ENCODE measurements at regions of chr1 and their contacts with region 1.

Region 1: GRCh38 chr1:151594143-151594625 is 17.7 kb upstream of the SNX27 start:
- DNase-seq: peak; percentile 84
- H3K4me3 Mint-ChIP-seq: no peak overlapping the region
- H3K27ac Mint-ChIP-seq: no peak overlapping the region
- H3K4me1 Mint-ChIP-seq: peaks cover 21% of the 10 kb centered on the region
- H3K27me3 Mint-ChIP-seq: no peaks in the 10 kb centered on the region
- CTCF ChIP-seq: peak; percentile 99

Region 2: DNA sequence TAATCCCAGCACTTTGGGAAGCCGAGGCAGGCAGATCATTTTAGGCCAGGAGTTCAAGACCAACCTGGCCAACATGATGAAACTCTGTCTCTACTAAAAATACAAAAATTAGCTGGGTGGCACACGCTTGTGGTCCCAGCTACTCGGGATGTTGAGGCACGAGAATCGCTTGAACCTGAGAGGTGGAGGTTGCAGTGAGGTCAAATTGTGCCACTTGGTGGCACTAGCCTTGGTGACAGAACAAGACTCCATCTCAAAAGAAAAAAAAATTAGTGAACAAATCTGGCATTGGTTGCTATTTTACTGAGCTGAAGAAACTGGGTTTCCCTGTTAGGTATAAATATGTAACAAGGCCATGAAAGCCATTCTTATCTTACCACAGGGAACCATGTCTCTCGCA is 366.6 kb before region 1 on chr1:
- CTCF ChIA-PET with region 1: no interaction called
- POLR2A ChIA-PET with region 1: no interaction called
- intact Hi-C with region 1: no loop called
- DNase-seq: no peak
- H3K4me3 Mint-ChIP-seq: no peak overlapping the region
- H3K27ac Mint-ChIP-seq: no peak overlapping the region
- H3K4me1 Mint-ChIP-seq: peaks cover 6% of the 10 kb centered on the region
- H3K27me3 Mint-ChIP-seq: no peaks in the 10 kb centered on the region
- CTCF ChIP-seq: no peak

Region 3: DNA sequence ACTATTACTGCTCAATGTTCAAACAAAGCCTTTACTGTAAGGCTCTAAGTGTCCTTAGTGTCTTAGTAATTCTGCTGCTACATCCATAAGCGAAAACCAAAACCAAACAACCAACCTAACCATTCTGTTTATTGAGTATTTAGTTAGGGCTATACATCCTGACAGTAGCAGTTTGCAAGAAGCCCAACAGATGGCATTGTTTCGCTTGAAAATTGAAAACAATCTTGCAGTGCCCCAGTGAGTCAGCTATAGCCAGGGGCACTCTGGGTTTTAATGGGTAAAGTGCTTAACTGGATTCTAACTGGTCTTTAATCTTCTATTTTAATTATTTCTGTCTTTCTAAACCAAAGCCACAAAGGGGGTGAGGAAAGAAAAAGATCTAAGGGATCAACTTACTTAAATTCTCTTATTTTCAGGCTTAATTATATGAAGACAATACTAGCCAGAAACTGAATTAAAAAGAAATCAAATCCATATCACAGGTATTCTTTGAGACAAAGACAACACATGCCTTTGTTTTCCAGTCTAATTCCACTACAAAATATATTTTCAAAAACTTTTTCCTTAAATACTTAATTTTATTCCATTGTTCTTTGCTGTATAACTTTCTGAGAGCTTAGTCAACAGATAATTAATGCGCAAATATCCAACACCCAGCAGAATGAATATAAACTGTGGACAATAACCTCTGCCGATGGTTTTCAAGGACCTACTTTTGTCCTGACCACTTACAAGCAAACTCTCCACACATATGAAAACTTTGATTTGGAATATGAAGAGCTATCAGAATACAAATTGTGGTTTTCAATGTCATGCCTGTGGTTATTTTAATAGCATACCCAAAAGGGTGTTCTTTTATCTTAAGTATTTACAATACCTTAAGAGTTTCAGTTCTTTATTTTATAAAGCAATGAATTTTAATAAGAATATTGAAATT is 150.1 kb before region 1 on chr1:
- CTCF ChIA-PET with region 1: interaction called, 9 read pairs
- POLR2A ChIA-PET with region 1: interaction called, 5 read pairs
- intact Hi-C with region 1: loop called (anchors 1 kb)
- DNase-seq: peak; percentile 94
- H3K4me3 Mint-ChIP-seq: no peak overlapping the region
- H3K27ac Mint-ChIP-seq: no peak overlapping the region
- H3K4me1 Mint-ChIP-seq: peaks cover 24% of the 10 kb centered on the region
- H3K27me3 Mint-ChIP-seq: no peaks in the 10 kb centered on the region
- CTCF ChIP-seq: peak; percentile 93

Region 4: DNA sequence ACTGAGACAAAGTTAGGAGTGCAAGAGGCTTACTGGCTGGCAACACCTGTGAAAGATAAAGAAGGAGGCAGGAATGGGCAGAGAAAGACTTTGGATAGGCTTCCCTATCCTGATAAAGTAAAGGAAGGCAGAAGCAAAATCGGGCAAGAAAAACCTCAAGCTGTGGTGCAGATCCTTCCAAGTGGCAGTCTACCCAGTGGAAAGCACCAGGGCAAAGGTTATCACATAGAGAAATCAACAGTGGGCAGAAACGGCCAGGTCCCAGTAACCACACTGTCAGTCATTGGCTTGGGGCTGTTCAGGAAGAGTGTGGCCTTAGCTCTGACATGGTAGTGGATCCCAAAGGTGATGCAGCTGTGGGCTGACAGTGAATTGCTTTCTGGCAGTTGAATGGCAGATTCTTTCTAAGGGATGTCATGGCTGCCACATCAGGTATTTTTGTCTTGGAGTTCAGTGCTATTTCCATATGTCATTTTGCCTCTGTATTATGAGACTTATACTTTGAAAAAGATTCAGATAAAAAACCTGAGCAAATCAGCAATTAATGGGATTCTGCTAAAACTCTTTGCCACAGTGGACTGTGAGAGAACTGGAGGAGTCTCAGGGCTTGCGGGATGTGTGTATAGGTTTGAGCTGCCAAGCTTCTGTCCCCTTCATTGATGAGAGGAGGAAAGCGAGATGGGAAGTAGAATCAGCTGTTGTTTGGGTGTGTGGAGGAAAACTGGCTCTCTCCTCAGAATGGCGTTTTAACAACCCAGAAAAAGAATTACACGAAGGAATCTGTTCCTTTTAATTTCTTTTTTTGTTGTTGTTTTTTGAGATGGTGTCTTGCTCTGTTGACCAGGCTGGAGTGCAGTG is 91.0 kb before region 1 on chr1:
- CTCF ChIA-PET with region 1: no interaction called
- POLR2A ChIA-PET with region 1: no interaction called
- intact Hi-C with region 1: no loop called
- DNase-seq: no peak
- H3K4me3 Mint-ChIP-seq: no peak overlapping the region
- H3K27ac Mint-ChIP-seq: no peak overlapping the region
- H3K4me1 Mint-ChIP-seq: no peaks in the 10 kb centered on the region
- H3K27me3 Mint-ChIP-seq: peaks cover 55% of the 10 kb centered on the region
- CTCF ChIP-seq: no peak

Region 5: GRCh38 chr1:151547119-151547899 is 46.9 kb before region 1 on chr1:
- CTCF ChIA-PET with region 1: interaction called, 15 read pairs
- POLR2A ChIA-PET with region 1: interaction called, 4 read pairs
- intact Hi-C with region 1: no loop called
- DNase-seq: peak; percentile 98
- H3K4me3 Mint-ChIP-seq: peak overlapping the region; percentile 51
- H3K27ac Mint-ChIP-seq: peak overlapping the region; percentile 67
- H3K4me1 Mint-ChIP-seq: peaks cover 71% of the 10 kb centered on the region
- H3K27me3 Mint-ChIP-seq: no peaks in the 10 kb centered on the region
- CTCF ChIP-seq: no peak

Region 6: GRCh38 chr1:151619489-151620093 is 25.4 kb after region 1 on chr1:
- CTCF ChIA-PET with region 1: interaction called, 33 read pairs
- POLR2A ChIA-PET with region 1: interaction called, 6 read pairs
- intact Hi-C with region 1: no loop called
- DNase-seq: peak; percentile 58
- H3K4me3 Mint-ChIP-seq: no peak overlapping the region
- H3K27ac Mint-ChIP-seq: peak overlapping the region; percentile 17
- H3K4me1 Mint-ChIP-seq: peaks cover 37% of the 10 kb centered on the region
- H3K27me3 Mint-ChIP-seq: no peaks in the 10 kb centered on the region
- CTCF ChIP-seq: no peak

Region 7: DNA sequence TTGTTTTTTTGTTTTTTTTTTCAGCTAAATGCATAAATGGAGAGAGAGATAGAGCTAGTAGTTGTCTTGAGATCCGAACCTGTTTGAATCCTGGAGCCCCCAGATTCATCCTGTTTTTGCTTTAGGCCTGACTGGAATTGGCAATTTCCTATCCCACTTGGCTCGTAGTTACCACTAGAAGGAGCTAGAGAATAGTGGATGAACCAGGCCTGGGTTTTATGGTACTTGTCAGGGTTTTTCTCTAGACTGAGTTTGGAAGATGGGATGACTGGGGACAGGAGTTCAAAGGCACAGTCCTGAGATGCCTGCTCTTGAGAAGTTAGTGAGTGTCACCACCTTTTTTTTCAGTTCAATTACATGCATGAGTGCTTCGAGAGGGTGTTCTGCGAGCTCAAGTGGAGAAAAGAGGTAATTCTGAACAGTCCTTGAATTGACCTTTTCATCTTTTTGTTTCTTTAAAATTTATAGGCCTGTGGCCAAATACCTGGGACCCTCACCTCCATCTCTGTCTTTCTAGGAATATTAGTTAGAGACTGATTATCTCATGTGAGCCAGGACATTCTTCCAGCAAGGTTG is 99.0 kb after region 1 on chr1:
- CTCF ChIA-PET with region 1: interaction called, 11 read pairs
- POLR2A ChIA-PET with region 1: no interaction called
- intact Hi-C with region 1: loop called (anchors 2 kb)
- DNase-seq: peak; percentile 60
- H3K4me3 Mint-ChIP-seq: no peak overlapping the region
- H3K27ac Mint-ChIP-seq: peak overlapping the region; percentile 43
- H3K4me1 Mint-ChIP-seq: no peaks in the 10 kb centered on the region
- H3K27me3 Mint-ChIP-seq: no peaks in the 10 kb centered on the region
- CTCF ChIP-seq: peak; percentile 74

Region 8: DNA sequence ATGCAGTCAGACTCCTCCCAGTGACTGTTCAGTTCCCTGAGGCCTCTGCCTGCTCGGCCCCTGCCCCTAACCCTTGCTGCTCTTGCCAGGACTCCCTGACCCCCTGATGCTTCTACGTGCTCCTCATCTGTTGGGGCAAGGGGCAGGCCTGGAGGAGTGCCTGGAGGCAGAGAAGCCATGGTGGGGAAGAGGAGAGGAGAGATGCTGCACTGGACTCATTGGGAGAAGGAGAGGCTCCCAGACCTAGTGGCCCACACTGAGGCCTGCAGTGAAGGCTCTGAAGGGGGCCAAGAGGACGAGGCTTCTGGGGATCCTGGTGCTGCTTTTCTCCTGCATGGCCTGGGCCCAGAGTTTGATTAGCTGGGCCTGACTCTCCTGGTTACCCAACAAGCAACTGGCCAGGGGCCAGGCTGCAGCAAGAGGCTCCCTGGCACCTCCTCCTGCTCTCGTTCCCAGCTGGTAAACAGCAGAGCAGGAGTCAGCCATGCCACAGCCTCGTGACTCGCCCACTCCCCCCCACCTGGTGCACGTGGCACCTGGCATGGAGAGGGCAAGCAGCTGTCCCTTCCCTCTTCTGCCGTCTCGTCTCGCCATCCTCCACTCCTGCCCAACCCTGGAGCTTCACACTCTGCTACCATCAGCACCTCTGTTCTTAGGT is 238.3 kb after region 1 on chr1:
- CTCF ChIA-PET with region 1: interaction called, 11 read pairs
- POLR2A ChIA-PET with region 1: interaction called, 3 read pairs
- intact Hi-C with region 1: loop called (anchors 1 kb)
- DNase-seq: peak; percentile 95
- H3K4me3 Mint-ChIP-seq: peak overlapping the region; percentile 56
- H3K27ac Mint-ChIP-seq: peak overlapping the region; percentile 60
- H3K4me1 Mint-ChIP-seq: peaks cover 67% of the 10 kb centered on the region
- H3K27me3 Mint-ChIP-seq: no peaks in the 10 kb centered on the region
- CTCF ChIP-seq: no peak